HCT116 (cell line): ENCODE measurements at regions of chr12 and their contacts with region 1.

Region 1: DNA sequence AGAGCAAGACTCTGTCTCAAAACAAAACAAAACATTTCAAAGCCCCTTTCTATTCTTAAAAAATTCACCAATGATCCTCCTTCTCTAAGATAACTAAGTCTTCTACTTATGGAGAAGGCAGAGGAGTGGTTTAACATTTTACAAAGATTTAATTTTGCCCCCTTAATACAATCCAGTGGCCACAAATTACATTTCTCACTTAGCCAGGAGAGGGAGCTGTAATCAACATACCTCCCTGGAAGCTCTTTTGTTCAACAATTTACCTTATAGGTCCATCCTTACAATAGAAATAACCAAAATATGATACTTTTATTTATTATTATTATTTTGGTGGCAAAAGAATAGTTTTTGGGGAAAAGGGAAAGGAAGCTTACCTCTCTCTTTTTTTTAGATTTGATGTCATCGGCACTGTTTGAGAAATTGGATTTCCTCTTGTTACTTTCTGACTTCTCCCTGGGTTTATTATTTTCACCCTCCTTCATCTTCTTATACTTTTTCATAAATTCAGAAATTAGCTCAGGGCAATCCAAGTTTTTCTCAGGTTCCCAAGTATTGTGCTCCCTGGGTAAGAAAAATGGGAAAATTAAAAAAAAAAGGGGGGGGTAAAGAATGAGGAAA is 28.1 kb downstream of the CBX5 start:
- DNase-seq: peak; percentile 37
- ATAC-seq: peak; percentile 64
- H3K4me3 ChIP-seq: no peak overlapping the region
- H3K27ac ChIP-seq: no peak overlapping the region
- H3K4me1 ChIP-seq: peaks cover 12 to 13% of the 10 kb centered on the region in 2 experiments
- H3K27me3 ChIP-seq: no peaks in the 10 kb centered on the region
- CTCF ChIP-seq: peak; percentile 64 to 75 (median 64); a peak in 5 of 6 replicates
- POLR2A ChIP-seq: no peak
- RAD21 ChIP-seq: peak; percentile 66

Region 2: GRCh38 chr12:54173066-54173726 is 78.6 kb before region 1 on chr12:
- CTCF ChIA-PET with region 1: no interaction called
- POLR2A ChIA-PET with region 1: no interaction called
- RAD21 ChIA-PET with region 1: no interaction called
- intact Hi-C with region 1: no loop called
- DNase-seq: no peak
- ATAC-seq: peak; percentile 56
- H3K4me3 ChIP-seq: peak overlapping the region in 1 of 2 experiments; percentile 35; a peak in 3 of 4 replicates
- H3K27ac ChIP-seq: no peak overlapping the region
- H3K4me1 ChIP-seq: peaks cover 4 to 21% of the 10 kb centered on the region in 2 experiments
- H3K27me3 ChIP-seq: peaks cover 30% of the 10 kb centered on the region
- CTCF ChIP-seq: no peak
- POLR2A ChIP-seq: no peak
- RAD21 ChIP-seq: no peak

Region 3: GRCh38 chr12:54240971-54241588 is 10.7 kb before region 1 on chr12:
- CTCF ChIA-PET with region 1: interaction called, 16 read pairs
- POLR2A ChIA-PET with region 1: interaction called, 6 read pairs
- RAD21 ChIA-PET with region 1: no interaction called
- intact Hi-C with region 1: no loop called
- DNase-seq: no peak
- ATAC-seq: no peak
- H3K4me3 ChIP-seq: no peak overlapping the region
- H3K27ac ChIP-seq: no peak overlapping the region
- H3K4me1 ChIP-seq: no peaks in the 10 kb centered on the region
- H3K27me3 ChIP-seq: no peaks in the 10 kb centered on the region
- CTCF ChIP-seq: no peak
- POLR2A ChIP-seq: no peak
- RAD21 ChIP-seq: no peak